ENCODE measurements at regions of chr10 and their contacts with region 1.

Region 1: DNA sequence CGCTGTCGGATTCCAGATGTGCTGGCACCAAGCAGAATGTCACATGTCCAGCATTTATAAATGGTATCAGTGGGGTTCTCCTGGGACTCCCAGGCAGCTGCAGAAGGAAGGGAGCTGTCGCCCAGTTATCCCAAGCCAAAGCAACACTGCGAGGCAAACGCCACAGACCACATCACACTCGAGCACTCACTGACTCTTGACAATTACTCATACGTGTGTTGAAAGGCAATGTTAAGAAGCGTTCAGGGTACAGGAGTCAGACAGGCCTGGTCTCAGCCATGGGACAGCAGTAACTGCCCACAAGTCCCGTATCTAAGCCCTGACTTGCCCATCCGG is 113.4 kb downstream of the DIP2C start:
- DNase-seq: no peak
- ATAC-seq: no peak
- H3K4me3 ChIP-seq: no peak overlapping the region
- H3K27ac ChIP-seq: no peak overlapping the region
- H3K4me1 ChIP-seq: no peaks in the 10 kb centered on the region
- H3K27me3 ChIP-seq: peaks cover 31 to 38% of the 10 kb centered on the region in 2 experiments; a peak in 4 of 5 replicates
- CTCF ChIP-seq: no peak
- EP300 ChIP-seq: no peak
- POLR2A ChIP-seq: no peak
- RAD21 ChIP-seq: no peak

Region 2: DNA sequence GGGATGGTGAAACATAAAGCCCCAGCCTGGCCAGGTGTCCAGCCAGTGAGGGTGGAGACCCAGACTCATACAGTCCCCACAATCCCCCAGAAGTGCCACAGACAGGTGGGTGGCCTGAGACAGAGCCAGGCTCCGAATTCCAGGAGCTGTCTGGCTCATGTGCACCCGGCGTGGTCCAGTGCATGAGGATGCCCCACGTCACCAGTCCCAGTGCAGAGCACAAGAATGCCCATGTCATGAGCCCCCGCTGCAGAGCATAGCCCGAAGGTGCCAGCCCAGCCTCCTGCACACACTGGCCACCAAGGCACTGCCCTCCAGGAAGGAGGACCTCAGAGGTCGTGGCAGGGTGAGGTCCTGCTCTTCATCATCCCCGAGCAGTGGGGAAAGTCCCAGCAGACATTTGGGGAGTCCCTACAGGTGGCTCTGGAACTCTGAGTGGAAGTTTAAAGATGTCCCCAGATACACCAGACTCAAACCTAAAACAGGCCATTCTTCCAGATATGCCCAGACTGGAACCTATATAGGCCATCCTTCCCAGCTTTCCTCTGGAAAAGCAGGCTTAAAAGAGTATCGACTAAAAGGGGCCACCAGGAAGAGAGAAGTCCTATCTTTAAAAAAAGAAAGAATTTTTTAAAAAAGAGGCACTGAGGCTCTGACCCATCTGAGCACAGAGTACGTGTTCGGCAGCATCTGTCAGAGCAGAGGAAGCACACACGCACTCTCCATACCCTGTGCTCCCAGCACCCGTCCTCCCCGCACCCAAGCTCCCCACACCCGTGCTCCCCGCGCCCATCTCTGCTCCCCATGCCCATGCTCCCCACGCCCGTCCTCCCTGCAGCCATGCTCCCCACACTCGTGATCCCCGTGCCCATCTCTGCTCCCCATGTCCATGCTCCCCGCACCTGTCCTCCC is 101.9 kb after region 1 on chr10:
- CTCF ChIA-PET with region 1: no interaction called
- POLR2A ChIA-PET with region 1: no interaction called
- in situ Hi-C with region 1: loop called (anchors 10 kb)
- intact Hi-C with region 1: no loop called
- DNase-seq: no peak
- ATAC-seq: no peak
- H3K4me3 ChIP-seq: no peak overlapping the region
- H3K27ac ChIP-seq: no peak overlapping the region
- H3K4me1 ChIP-seq: no peaks in the 10 kb centered on the region
- H3K27me3 ChIP-seq: peaks cover 3 to 28% of the 10 kb centered on the region in 2 experiments; a peak in 4 of 5 replicates
- CTCF ChIP-seq: no peak
- EP300 ChIP-seq: no peak
- POLR2A ChIP-seq: no peak
- RAD21 ChIP-seq: no peak

Measured in K562 (cell line).